ENCODE measurements at regions of chr10 and their contacts with region 1.

Region 1: DNA sequence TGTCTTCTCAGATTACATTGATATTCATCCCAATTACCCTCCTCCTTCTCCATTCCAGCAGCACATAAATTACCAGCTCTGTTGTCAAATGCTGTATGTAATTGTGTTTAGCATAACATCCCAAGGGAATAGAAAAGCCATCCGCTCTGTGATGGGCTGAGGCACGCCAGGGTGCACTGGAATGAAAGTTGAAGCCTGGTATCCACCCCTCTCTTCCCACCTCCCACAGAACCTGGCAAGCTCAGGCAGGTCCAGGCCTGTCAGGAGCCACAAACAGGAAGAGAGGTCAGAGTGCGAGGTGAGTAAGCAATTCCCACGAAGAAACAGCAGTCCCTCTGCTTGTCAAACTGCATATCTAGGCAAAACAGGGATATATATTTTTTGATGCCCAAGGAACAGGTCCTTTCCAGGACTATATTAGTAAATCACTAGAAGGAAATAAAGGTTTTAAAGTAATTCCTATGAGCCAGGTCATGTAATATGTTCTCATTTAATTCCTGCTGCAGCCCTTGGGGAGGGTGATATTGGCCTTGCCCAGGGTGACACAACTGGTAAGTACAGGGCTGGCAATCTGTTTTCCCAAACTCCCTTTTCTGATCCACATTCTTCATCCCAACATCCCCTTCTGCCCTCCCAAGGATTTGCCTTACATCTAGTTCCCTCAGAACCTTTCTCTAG is 155.6 kb upstream of the GHITM start:
- DNase-seq: no peak

Region 2: DNA sequence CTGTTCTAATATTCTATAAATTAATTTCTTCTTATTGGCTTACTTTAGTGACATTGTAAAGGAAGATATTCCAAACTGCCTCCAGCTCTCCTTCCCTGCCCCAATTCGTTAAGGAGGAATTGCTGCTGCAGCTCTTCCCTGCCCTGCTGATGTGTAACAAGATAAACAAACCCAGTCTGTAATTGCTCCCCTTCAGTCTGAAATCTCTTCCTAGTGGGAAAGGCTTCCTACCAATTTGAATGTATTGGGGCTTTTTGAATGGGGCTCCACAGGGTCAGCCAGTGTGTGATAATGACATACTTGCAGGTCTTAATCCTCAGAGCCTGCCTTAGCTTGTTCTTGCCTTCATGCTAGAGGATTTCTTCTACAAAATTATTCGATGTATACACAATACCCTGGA is 694.3 kb before region 1 on chr10:
- intact Hi-C with region 1: loop called in 1 of 2 experiments (anchors 5 kb)
- DNase-seq: no peak

Measured in posterior vena cava (tissue), 2 donors.